Activated T-helper 1 cell treated with anti-CD3 and anti-CD28 coated beads, Interleukin-12 subunit alpha, Interleukin-12 subunit beta, Interleukin-2, Interleukin-4 antibody, amounts not matched to agents 30 ng/mL and 10 ng/mL and 1 ng/mL, durations not matched to agents 14 hours and 24 hours and 36 hours (primary cell): ENCODE measurements at regions of chr19 and their contacts with region 1.

Region 1: GRCh38 chr19:41872775-41873647 is 4.1 kb upstream of the CD79A start:
- DNase-seq: peak; percentile 49
- H3K4me3 Mint-ChIP-seq: peak overlapping the region; percentile 29
- H3K27ac Mint-ChIP-seq: peak overlapping the region; percentile 88
- H3K4me1 Mint-ChIP-seq: peaks cover 84% of the 10 kb centered on the region
- H3K27me3 Mint-ChIP-seq: no peaks in the 10 kb centered on the region

Region 2: GRCh38 chr19:41904118-41904870 is 31.3 kb after region 1 on chr19:
- intact Hi-C with region 1: no loop called
- DNase-seq: no peak
- H3K4me3 Mint-ChIP-seq: no peak overlapping the region
- H3K27ac Mint-ChIP-seq: peak overlapping the region; percentile 12
- H3K4me1 Mint-ChIP-seq: peaks cover 9% of the 10 kb centered on the region
- H3K27me3 Mint-ChIP-seq: no peaks in the 10 kb centered on the region

Region 3: GRCh38 chr19:41934849-41935374 is 61.9 kb after region 1 on chr19:
- intact Hi-C with region 1: loop called (anchors 1 kb)
- DNase-seq: peak; percentile 61
- H3K4me3 Mint-ChIP-seq: peak overlapping the region; percentile 13
- H3K27ac Mint-ChIP-seq: peak overlapping the region; percentile 77
- H3K4me1 Mint-ChIP-seq: peaks cover 44% of the 10 kb centered on the region
- H3K27me3 Mint-ChIP-seq: peaks cover 24% of the 10 kb centered on the region

Region 4: GRCh38 chr19:42108527-42109389 is 235.7 kb after region 1 on chr19:
- intact Hi-C with region 1: no loop called
- DNase-seq: peak; percentile 82
- H3K4me3 Mint-ChIP-seq: no peak overlapping the region
- H3K27ac Mint-ChIP-seq: peak overlapping the region; percentile 42
- H3K4me1 Mint-ChIP-seq: peaks cover 43% of the 10 kb centered on the region
- H3K27me3 Mint-ChIP-seq: no peaks in the 10 kb centered on the region